ENCODE measurements at regions of chr6 and their contacts with region 1.

Region 1: GRCh38 chr6:96521644-96522464 is at the start of gene UFL1:
- DNase-seq: peak; percentile 91 to 96 (median 94)
- H3K4me3 ChIP-seq: peak within 1 kb of the TSS; percentile 77 to 79
- H3K4me3 Mint-ChIP-seq: peak within 1 kb of the TSS; percentile 96 to 100 (median 100)
- H3K27ac ChIP-seq: peak within 1 kb of the TSS; percentile 97
- H3K27ac Mint-ChIP-seq: peak within 1 kb of the TSS; percentile 99 to 100 (median 100)
- H3K4me1 ChIP-seq: peaks cover 36% of the 10 kb centered on the region
- H3K4me1 Mint-ChIP-seq: peaks cover 16 to 41% (median 23%) of the 10 kb centered on the region in 4 donors
- H3K27me3 ChIP-seq: no peaks in the 10 kb centered on the region
- H3K27me3 Mint-ChIP-seq: no peaks in the 10 kb centered on the region
- total RNA-seq, gene UFL1: 35.0 to 38.5 TPM

Region 2: DNA sequence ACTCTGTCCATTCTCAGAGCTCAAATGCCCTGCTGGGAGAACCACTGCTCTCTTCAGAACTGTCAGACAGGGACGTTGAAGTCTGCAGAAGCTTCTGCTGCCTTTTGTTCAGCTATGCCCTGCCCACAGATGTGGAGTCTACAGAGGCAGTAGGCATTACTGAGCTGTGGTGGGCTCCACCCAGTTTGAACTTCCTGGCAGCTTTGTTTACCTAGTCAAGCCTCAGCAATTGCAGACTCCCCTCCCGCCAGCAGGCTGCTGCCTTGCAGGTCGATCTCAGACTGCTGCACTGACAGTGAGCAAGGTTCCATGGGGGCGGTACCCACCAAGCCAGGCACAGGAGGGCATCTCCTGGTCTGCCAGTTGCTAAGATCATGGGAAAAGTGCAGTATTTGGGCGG is 22.1 kb before region 1 on chr6:
- CTCF ChIA-PET with region 1: interaction called, 25 read pairs
- POLR2A ChIA-PET with region 1: interaction called, 117 read pairs
- intact Hi-C with region 1: loop called (anchors 1 kb)
- DNase-seq: peak; percentile 65 to 81 (median 77)
- H3K4me3 ChIP-seq: peak overlapping the region in 1 of 2 donors; percentile 41
- H3K4me3 Mint-ChIP-seq: peak overlapping the region in 7 of 8 donors; percentile 49 to 73 (median 61)
- H3K27ac ChIP-seq: peak overlapping the region; percentile 16
- H3K27ac Mint-ChIP-seq: peak overlapping the region; percentile 47 to 88 (median 84)
- H3K4me1 ChIP-seq: peaks cover 36% of the 10 kb centered on the region
- H3K4me1 Mint-ChIP-seq: peaks cover 30 to 47% (median 33%) of the 10 kb centered on the region in 4 donors
- H3K27me3 ChIP-seq: no peaks in the 10 kb centered on the region
- H3K27me3 Mint-ChIP-seq: peaks cover 0 to 1% of the 10 kb centered on the region in 2 donors

Region 3: GRCh38 chr6:96725296-96725695 is 203.4 kb after region 1 on chr6:
- CTCF ChIA-PET with region 1: no interaction called
- POLR2A ChIA-PET with region 1: no interaction called
- intact Hi-C with region 1: no loop called
- DNase-seq: no peak
- H3K4me3 ChIP-seq: no peak overlapping the region
- H3K4me3 Mint-ChIP-seq: no peak overlapping the region
- H3K27ac ChIP-seq: no peak overlapping the region
- H3K27ac Mint-ChIP-seq: no peak overlapping the region
- H3K4me1 ChIP-seq: no peaks in the 10 kb centered on the region
- H3K4me1 Mint-ChIP-seq: no peaks in the 10 kb centered on the region
- H3K27me3 ChIP-seq: no peaks in the 10 kb centered on the region
- H3K27me3 Mint-ChIP-seq: peaks cover 6% of the 10 kb centered on the region in 2 donors

Region 4: GRCh38 chr6:96837081-96837971 is 315.5 kb after region 1 on chr6 and contains the start of gene GPR63:
- CTCF ChIA-PET with region 1: no interaction called
- POLR2A ChIA-PET with region 1: no interaction called
- intact Hi-C with region 1: loop called (anchors 1 kb)
- DNase-seq: peak; percentile 64 to 78 (median 66)
- H3K4me3 ChIP-seq: peak within 1 kb of the TSS; percentile 2 to 69
- H3K4me3 Mint-ChIP-seq: peak within 1 kb of the TSS; percentile 89 to 96 (median 93)
- H3K27ac ChIP-seq: peak within 1 kb of the TSS; percentile 3
- H3K27ac Mint-ChIP-seq: peak within 1 kb of the TSS; percentile 49 to 87 (median 77)
- H3K4me1 ChIP-seq: peaks cover 18% of the 10 kb centered on the region
- H3K4me1 Mint-ChIP-seq: peaks cover 10 to 33% (median 22%) of the 10 kb centered on the region in 4 donors
- H3K27me3 ChIP-seq: no peaks in the 10 kb centered on the region
- H3K27me3 Mint-ChIP-seq: peaks cover 0 to 12% of the 10 kb centered on the region in 2 donors
- total RNA-seq, gene GPR63: 1.9 TPM

Region 5: DNA sequence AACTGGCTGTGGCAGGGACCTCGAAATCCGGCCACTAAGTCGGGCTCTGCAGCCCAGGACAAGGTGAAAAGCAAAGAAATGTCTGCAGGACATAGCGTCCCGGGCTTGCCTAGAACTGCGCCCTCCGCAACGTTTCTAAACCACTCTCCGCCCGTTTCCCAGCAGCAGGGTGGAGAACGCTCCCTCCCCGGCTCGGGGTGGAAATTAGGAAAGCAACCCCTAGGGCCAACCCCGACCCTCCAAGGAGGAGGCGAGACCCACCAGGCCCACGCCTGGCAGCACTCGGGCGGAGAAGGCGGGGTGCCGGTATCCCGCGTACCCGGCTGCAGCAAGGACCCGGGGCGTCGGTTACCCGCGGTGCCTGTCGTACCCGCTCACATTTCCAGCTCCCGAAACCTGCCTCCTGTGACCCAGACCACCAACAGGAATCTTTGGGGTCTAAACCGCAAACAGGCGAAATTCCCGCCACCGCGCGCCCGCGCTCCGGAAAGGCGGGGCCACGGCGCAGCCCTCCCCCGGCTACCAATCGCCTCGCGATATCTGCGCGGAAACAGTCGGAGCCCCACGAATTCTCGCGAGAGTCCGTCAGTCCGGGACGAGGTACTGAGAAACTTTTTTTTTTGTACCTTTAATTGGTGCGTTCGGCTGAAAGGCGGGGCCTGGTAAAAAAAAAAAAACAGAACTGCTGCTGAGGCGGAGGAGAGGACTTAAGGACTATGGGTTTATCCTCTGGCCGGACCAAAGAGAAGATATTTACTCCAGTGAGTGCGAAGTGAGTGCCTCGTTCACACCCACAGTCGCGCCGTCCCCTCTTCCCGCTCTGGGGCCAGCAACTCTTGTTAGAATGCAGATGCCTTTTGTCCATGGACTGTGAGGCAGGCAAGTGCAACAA is 761.1 kb after region 1 on chr6 and contains the start of gene MMS22L:
- CTCF ChIA-PET with region 1: no interaction called
- POLR2A ChIA-PET with region 1: no interaction called
- intact Hi-C with region 1: loop called (anchors 1 kb)
- DNase-seq: peak; percentile 92 to 93 (median 93)
- H3K4me3 ChIP-seq: peak within 1 kb of the TSS; percentile 73 to 92
- H3K4me3 Mint-ChIP-seq: peak within 1 kb of the TSS; percentile 92 to 98 (median 96)
- H3K27ac ChIP-seq: peak within 1 kb of the TSS; percentile 64
- H3K27ac Mint-ChIP-seq: peak within 1 kb of the TSS; percentile 86 to 96 (median 92)
- H3K4me1 ChIP-seq: peaks cover 22% of the 10 kb centered on the region
- H3K4me1 Mint-ChIP-seq: peaks cover 16 to 37% (median 26%) of the 10 kb centered on the region in 4 donors
- H3K27me3 ChIP-seq: no peaks in the 10 kb centered on the region
- H3K27me3 Mint-ChIP-seq: no peaks in the 10 kb centered on the region
- total RNA-seq, gene MMS22L: 12.4 to 13.2 TPM